Naive thymus-derived CD4-positive, alpha-beta T cell (primary cell): ENCODE measurements at regions of chr1 and their contacts with region 1.

Region 1: DNA sequence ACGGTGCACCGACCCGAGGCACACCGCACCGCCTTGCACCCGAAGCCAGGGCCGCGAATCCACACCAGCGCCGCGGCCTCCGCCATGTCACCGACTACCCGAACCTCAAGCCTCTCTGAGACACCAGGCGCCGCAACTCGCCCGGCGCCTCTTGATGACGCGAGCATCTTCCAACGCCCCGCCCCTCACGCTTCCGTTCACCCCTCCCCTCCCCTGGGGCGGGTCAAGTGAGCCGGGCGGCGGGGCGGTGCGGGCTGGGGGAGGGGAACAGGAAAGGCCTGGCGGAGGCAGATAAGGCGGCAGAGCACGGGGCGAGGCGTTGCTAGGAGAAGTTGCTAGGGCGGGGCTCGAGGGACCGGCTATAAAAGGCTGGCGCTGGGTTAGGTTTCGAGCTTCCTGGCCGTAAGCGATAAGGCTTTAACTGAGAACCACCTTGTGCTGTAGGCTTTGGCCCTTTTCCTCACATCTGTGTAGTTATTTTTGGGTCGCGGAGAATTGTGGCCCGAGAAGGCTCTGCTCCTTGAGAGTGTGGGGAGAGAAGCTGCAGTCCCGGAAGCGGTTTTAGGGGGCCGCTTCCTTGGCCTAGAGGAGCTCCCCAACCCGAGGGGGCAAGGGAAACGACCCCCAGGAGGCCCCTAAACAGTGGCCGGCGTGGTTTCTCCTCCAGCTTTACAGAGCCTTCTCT is at the start of gene SDE2:
- DNase-seq: peak; percentile 98 to 100 (median 100)
- ATAC-seq: peak; percentile 93
- H3K4me3 ChIP-seq: peak within 1 kb of the TSS; percentile 84
- H3K4me3 Mint-ChIP-seq: peak within 1 kb of the TSS; percentile 89 to 100 (median 100)
- H3K27ac ChIP-seq: peak within 1 kb of the TSS; percentile 98
- H3K27ac Mint-ChIP-seq: peak within 1 kb of the TSS; percentile 95 to 100 (median 100)
- H3K4me1 ChIP-seq: peaks cover 51 to 71% of the 10 kb centered on the region in 2 donors
- H3K4me1 Mint-ChIP-seq: peaks cover 47 to 96% (median 79%) of the 10 kb centered on the region in 7 donors
- H3K27me3 ChIP-seq: no peaks in the 10 kb centered on the region
- H3K27me3 Mint-ChIP-seq: no peaks in the 10 kb centered on the region
- total RNA-seq, gene SDE2: 20.4 to 36.3 (median 20.8) TPM

Region 2: GRCh38 chr1:225428068-225428880 is 571.1 kb before region 1 on chr1:
- CTCF ChIA-PET with region 1: no interaction called
- POLR2A ChIA-PET with region 1: interaction called, 14 read pairs
- intact Hi-C with region 1: loop called (anchors 1 kb)
- DNase-seq: peak; percentile 81 to 94 (median 91)
- ATAC-seq: peak; percentile 95
- H3K4me3 ChIP-seq: peak overlapping the region; percentile 71
- H3K4me3 Mint-ChIP-seq: peak overlapping the region; percentile 88 to 99 (median 91)
- H3K27ac ChIP-seq: peak overlapping the region; percentile 78
- H3K27ac Mint-ChIP-seq: peak overlapping the region; percentile 71 to 97 (median 90)
- H3K4me1 ChIP-seq: peaks cover 31% of the 10 kb centered on the region in 2 donors
- H3K4me1 Mint-ChIP-seq: peaks cover 41 to 52% (median 46%) of the 10 kb centered on the region in 7 donors
- H3K27me3 ChIP-seq: no peaks in the 10 kb centered on the region
- H3K27me3 Mint-ChIP-seq: no peaks in the 10 kb centered on the region

Region 3: GRCh38 chr1:225777583-225778336 is 221.6 kb before region 1 on chr1 and contains the start of gene SRP9:
- CTCF ChIA-PET with region 1: interaction called, 6 read pairs
- POLR2A ChIA-PET with region 1: interaction called, 27 read pairs
- intact Hi-C with region 1: loop called (anchors 1 kb)
- DNase-seq: peak; percentile 97 to 100 (median 99)
- ATAC-seq: peak; percentile 98
- H3K4me3 ChIP-seq: peak within 1 kb of the TSS; percentile 94
- H3K4me3 Mint-ChIP-seq: no peak within 1 kb of the TSS
- H3K27ac ChIP-seq: peak within 1 kb of the TSS; percentile 97
- H3K27ac Mint-ChIP-seq: no peak within 1 kb of the TSS
- H3K4me1 ChIP-seq: peaks cover 22 to 51% of the 10 kb centered on the region in 2 donors
- H3K4me1 Mint-ChIP-seq: peaks cover 17 to 54% (median 36%) of the 10 kb centered on the region in 7 donors
- H3K27me3 ChIP-seq: no peaks in the 10 kb centered on the region
- H3K27me3 Mint-ChIP-seq: no peaks in the 10 kb centered on the region
- total RNA-seq, gene SRP9: 76.1 to 193 (median 145) TPM

Region 4: DNA sequence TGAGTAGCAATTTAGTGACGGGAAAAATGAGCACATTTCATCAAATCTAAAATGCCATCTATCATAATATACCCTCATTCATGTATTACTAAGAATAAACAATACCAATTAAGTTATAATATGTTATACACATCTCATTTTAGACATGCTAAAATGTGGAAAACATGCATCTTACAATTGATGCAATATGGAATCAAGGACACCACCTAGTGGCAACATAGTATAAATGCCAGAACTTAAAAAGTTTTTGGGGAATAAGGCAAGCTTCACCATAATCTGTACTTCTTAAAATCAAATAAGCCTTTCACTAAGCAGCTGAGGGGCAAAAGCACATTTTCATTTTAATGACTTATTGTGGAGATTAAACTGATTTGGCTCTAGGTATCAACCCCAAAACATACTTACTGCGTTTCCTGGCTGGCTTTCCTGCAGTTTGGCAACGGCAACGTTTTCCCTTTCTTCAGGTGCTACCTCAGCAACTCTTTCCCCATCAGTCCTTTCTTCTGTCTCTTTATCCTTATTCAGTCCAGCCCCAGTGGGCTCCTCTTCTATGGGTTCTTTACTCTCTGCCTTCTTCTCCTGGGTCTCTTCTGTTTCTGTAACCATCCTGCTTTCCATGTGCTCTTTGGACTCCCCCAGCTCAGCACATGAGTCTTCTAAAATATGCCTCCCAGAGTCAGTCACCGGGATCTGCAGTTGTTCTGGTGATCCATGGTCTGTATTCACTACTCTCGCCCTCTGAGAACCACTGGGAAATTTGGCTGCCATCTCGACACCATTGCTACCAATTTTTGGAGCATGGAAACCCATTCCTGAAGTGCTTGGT is 11.7 kb before region 1 on chr1:
- CTCF ChIA-PET with region 1: interaction called, 8 read pairs
- POLR2A ChIA-PET with region 1: interaction called, 37 read pairs
- intact Hi-C with region 1: no loop called
- DNase-seq: peak in 5 of 9 donors; percentile 41 to 54 (median 49)
- ATAC-seq: peak; percentile 80
- H3K4me3 ChIP-seq: no peak overlapping the region
- H3K4me3 Mint-ChIP-seq: peak overlapping the region in 1 of 10 donors; percentile 12
- H3K27ac ChIP-seq: no peak overlapping the region
- H3K27ac Mint-ChIP-seq: peak overlapping the region in 6 of 9 donors; percentile 1 to 55 (median 23)
- H3K4me1 ChIP-seq: peaks cover 0 to 10% of the 10 kb centered on the region in 2 donors
- H3K4me1 Mint-ChIP-seq: peaks cover 11 to 35% (median 24%) of the 10 kb centered on the region in 7 donors
- H3K27me3 ChIP-seq: no peaks in the 10 kb centered on the region
- H3K27me3 Mint-ChIP-seq: no peaks in the 10 kb centered on the region

Region 5: GRCh38 chr1:226069811-226070489 is 70.6 kb after region 1 on chr1:
- CTCF ChIA-PET with region 1: interaction called, 13 read pairs
- POLR2A ChIA-PET with region 1: interaction called, 450 read pairs
- intact Hi-C with region 1: no loop called
- DNase-seq: no peak
- ATAC-seq: no peak
- H3K4me3 ChIP-seq: no peak overlapping the region
- H3K4me3 Mint-ChIP-seq: peak overlapping the region in 9 of 10 donors; percentile 5 to 61 (median 40)
- H3K27ac ChIP-seq: peak overlapping the region; percentile 24
- H3K27ac Mint-ChIP-seq: peak overlapping the region in 8 of 9 donors; percentile 9 to 89 (median 78)
- H3K4me1 ChIP-seq: peaks cover 43 to 48% of the 10 kb centered on the region in 2 donors
- H3K4me1 Mint-ChIP-seq: peaks cover 42 to 73% (median 62%) of the 10 kb centered on the region in 7 donors
- H3K27me3 ChIP-seq: no peaks in the 10 kb centered on the region
- H3K27me3 Mint-ChIP-seq: no peaks in the 10 kb centered on the region

Region 6: DNA sequence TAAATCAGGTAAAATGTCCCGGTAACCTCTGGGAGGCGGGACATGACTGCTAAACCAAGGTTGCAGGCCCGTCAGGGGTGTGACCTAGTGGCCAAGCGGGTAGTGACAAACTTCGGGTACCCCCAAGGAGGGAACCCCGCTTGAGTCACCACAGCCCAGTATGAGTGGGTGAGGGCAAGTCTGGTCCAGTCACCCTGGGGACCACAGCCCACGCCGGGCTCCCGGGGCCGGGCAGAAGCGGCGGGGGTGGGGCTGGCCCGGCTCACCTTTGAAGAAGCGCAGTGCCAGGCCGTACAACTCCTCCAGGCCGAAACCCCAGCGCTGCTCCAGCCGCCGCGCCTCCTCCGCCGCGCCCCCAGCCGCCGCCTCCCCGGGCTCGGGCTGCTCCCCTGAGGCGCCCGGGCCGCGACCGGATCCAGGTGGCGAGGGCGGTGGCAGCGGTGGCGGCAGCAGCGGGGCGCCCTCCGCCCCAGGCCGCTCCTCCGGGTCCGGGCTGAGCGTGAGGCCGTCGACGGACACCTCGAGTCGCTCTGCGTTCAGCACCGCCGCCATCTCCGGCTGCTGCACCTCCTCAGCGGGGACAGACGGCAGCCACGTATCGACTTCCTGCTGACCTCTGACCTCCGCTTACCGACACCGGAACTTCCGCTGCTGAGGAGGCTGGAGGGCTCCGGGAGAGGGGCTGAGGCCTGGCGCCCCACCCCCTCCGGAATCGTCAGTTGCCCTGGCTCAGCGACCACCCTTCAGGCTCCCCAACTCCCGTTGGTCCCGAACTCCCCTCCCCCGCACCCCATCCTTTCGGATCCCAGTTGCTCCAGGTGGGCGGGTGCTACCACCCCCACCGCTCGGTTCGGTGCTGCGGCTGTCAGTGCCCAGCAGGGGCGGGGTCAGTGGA is 187.0 kb after region 1 on chr1 and contains the start of gene ACBD3:
- CTCF ChIA-PET with region 1: no interaction called
- POLR2A ChIA-PET with region 1: interaction called, 5 read pairs
- intact Hi-C with region 1: loop called (anchors 1 to 2 kb)
- DNase-seq: peak; percentile 66 to 87 (median 83)
- ATAC-seq: peak; percentile 96
- H3K4me3 ChIP-seq: peak within 1 kb of the TSS; percentile 97
- H3K4me3 Mint-ChIP-seq: peak within 1 kb of the TSS; percentile 91 to 99 (median 94)
- H3K27ac ChIP-seq: peak within 1 kb of the TSS; percentile 84
- H3K27ac Mint-ChIP-seq: peak within 1 kb of the TSS; percentile 88 to 98 (median 94)
- H3K4me1 ChIP-seq: peaks cover 23 to 30% of the 10 kb centered on the region in 2 donors
- H3K4me1 Mint-ChIP-seq: peaks cover 28 to 44% (median 36%) of the 10 kb centered on the region in 7 donors
- H3K27me3 ChIP-seq: no peaks in the 10 kb centered on the region
- H3K27me3 Mint-ChIP-seq: no peaks in the 10 kb centered on the region
- total RNA-seq, gene ACBD3: 19.6 to 29.9 (median 26.1) TPM

Region 7: DNA sequence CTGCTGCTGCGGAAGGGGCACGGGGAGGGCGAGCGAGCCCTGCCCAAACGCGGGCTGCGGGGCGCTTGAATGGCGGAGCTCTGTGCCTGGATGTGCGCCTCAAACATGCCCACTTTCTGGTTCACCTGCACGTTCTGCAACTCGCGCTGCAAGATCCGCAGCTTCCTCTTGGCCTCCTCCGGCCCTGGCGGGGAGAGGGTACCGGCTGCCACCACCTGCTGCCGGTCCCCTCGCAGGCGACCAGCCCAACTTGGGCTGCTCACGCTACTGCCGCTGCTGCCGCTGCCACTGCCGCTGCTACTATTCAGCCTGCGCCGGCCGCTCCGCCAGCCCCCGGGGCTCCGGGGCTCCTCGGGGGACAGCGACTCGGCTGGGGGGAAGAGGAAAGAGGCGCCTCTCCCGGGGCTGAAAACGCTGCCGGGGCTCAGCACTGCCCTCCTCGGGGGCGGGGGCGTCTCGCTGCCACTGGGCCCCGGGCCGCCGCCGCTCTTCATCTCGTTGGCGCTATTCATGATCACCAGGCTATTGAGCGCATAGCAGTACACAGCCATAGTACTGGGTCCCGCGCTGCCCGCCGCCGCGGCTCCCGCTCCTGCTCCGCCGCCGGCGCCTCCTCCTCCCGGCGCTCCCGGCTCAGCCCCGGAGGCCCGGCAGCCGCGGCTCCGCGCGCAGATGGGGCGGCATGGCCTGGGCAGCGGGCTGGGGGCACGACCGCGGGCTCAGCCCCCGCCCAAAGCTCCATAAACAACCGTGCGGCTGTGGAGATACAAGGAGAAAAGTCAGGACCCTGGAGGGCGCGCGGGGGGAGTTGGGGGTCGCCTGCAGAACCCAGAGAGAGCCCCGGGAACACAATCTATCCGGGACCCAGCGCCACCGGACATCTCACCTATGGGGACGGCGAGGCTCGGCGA is 737.8 kb after region 1 on chr1:
- CTCF ChIA-PET with region 1: no interaction called
- POLR2A ChIA-PET with region 1: no interaction called
- intact Hi-C with region 1: loop called in 1 of 2 experiments (anchors 5 kb)
- DNase-seq: peak in 7 of 9 donors; percentile 45 to 66 (median 59)
- ATAC-seq: peak; percentile 51
- H3K4me3 ChIP-seq: peak overlapping the region; percentile 99
- H3K4me3 Mint-ChIP-seq: peak overlapping the region; percentile 89 to 99 (median 93)
- H3K27ac ChIP-seq: peak overlapping the region; percentile 92
- H3K27ac Mint-ChIP-seq: peak overlapping the region; percentile 81 to 99 (median 97)
- H3K4me1 ChIP-seq: peaks cover 22 to 38% of the 10 kb centered on the region in 2 donors
- H3K4me1 Mint-ChIP-seq: peaks cover 14 to 54% (median 35%) of the 10 kb centered on the region in 7 donors
- H3K27me3 ChIP-seq: no peaks in the 10 kb centered on the region
- H3K27me3 Mint-ChIP-seq: no peaks in the 10 kb centered on the region